ENCODE measurements at regions of chr17 and their contacts with region 1.

Region 1: GRCh38 chr17:50169121-50169764 is 3.4 kb downstream of the SGCA start:
- DNase-seq: peak; percentile 65
- H3K4me3 ChIP-seq: no peak overlapping the region
- H3K27ac ChIP-seq: no peak overlapping the region
- H3K4me1 ChIP-seq: peaks cover 5% of the 10 kb centered on the region
- H3K27me3 ChIP-seq: no peaks in the 10 kb centered on the region
- CTCF ChIP-seq: peak; percentile 78 to 88
- POLR2A ChIP-seq: no peak

Region 2: GRCh38 chr17:50105811-50106210 is 63.4 kb before region 1 on chr17:
- CTCF ChIA-PET with region 1: no interaction called
- POLR2A ChIA-PET with region 1: no interaction called
- dilution Hi-C with region 1: no loop called
- intact Hi-C with region 1: no loop called
- DNase-seq: no peak
- H3K4me3 ChIP-seq: no peak overlapping the region
- H3K27ac ChIP-seq: no peak overlapping the region
- H3K4me1 ChIP-seq: no peaks in the 10 kb centered on the region
- H3K27me3 ChIP-seq: no peaks in the 10 kb centered on the region
- CTCF ChIP-seq: no peak
- POLR2A ChIP-seq: no peak

Region 3: DNA sequence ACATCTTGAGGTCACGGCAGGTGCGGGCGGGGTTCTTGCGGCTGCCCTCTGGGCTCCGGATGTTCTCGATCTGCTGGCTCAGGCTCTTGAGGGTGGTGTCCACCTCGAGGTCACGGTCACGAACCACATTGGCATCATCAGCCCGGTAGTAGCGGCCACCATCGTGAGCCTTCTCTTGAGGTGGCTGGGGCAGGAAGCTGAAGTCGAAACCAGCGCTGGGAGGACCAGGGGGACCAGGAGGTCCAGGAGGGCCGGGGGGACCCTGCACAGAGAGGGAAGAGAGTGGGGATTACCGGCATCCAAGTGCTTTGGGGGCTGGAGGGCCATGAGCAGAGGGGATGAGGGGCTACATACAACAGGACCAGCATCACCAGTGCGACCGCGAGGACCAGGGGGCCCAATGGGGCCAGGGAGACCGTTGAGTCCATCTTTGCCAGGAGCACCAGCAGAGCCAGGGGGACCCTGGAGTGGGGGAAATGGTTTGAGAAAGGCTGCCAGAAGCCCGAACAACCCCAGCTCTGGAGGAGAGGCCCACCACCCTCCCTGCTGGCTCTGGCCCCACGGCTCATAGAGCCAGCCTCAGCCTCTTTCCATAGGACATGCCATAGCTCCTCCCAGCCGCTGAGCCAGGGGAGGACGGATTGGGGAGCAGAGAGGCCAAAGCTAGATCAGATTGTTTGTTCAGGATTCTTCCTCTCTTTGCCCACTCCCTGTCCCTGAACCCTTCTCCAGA is 17.6 kb after region 1 on chr17:
- CTCF ChIA-PET with region 1: interaction called, 15 read pairs
- POLR2A ChIA-PET with region 1: no interaction called
- dilution Hi-C with region 1: no loop called
- intact Hi-C with region 1: no loop called
- DNase-seq: no peak
- H3K4me3 ChIP-seq: no peak overlapping the region
- H3K27ac ChIP-seq: no peak overlapping the region
- H3K4me1 ChIP-seq: no peaks in the 10 kb centered on the region
- H3K27me3 ChIP-seq: no peaks in the 10 kb centered on the region
- CTCF ChIP-seq: no peak
- POLR2A ChIP-seq: no peak

Region 4: DNA sequence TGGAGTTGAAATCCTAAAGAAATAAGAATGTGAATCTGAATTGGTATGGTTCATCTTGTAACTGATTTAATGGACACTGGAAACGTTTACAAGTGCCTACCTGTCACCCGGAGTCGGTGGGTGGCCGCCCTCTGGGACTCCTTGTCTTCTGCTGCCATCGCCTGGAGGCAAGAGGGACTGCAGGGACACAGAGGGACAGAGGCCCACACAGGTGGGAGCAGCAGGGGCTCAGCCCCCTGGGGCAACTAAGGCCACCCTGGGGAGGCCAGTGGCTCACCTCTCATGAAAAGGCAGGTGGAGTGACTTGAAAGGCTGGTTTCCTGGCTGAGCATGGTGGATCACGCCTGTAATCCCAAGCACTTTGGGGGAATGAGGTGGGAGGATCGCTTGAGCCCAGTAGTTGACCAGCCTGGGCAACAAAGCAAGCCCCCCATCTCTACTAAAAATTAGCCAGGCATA is 128.2 kb after region 1 on chr17:
- CTCF ChIA-PET with region 1: interaction called, 65 read pairs
- POLR2A ChIA-PET with region 1: no interaction called
- dilution Hi-C with region 1: no loop called
- intact Hi-C with region 1: loop called (anchors 1 kb)
- DNase-seq: peak; percentile 56
- H3K4me3 ChIP-seq: no peak overlapping the region
- H3K27ac ChIP-seq: no peak overlapping the region
- H3K4me1 ChIP-seq: no peaks in the 10 kb centered on the region
- H3K27me3 ChIP-seq: no peaks in the 10 kb centered on the region
- CTCF ChIP-seq: peak; percentile 88 to 91
- POLR2A ChIP-seq: no peak